HepG2 (cell line): ENCODE measurements at regions of chr12 and their contacts with region 1.

Region 1: GRCh38 chr12:65823513-65824375 is 539 bp upstream of the HMGA2 start:
- DNase-seq: peak; percentile 76
- ATAC-seq: peak; percentile 62
- H3K4me3 ChIP-seq: peak overlapping the region; percentile 76 to 98 (median 97)
- H3K27ac ChIP-seq: peak overlapping the region; percentile 84
- H3K4me1 ChIP-seq: peaks cover 22% of the 10 kb centered on the region
- H3K27me3 ChIP-seq: no peaks in the 10 kb centered on the region; a peak in 1 of 5 replicates
- CTCF ChIP-seq: no peak
- EP300 ChIP-seq: 0 out of 4 replicates have a peak, but pooled peaks of 1 of the 2 experiments have one; percentile 13
- POLR2A ChIP-seq: peak; percentile 58 to 71
- RAD21 ChIP-seq: peak; percentile 39; the same call in 1 of the 2 replicates

Region 2: GRCh38 chr12:65327207-65328076 is 496.3 kb before region 1 on chr12:
- CTCF ChIA-PET with region 1: no interaction called
- POLR2A ChIA-PET with region 1: no interaction called
- in situ Hi-C with region 1: no loop called
- intact Hi-C with region 1: loop called (anchors 5 kb)
- DNase-seq: peak; percentile 97
- ATAC-seq: peak; percentile 100
- H3K4me3 ChIP-seq: peak overlapping the region; percentile 29 to 54 (median 36); a peak in 5 of 6 replicates
- H3K27ac ChIP-seq: peak overlapping the region; percentile 87
- H3K4me1 ChIP-seq: peaks cover 40% of the 10 kb centered on the region
- H3K27me3 ChIP-seq: no peaks in the 10 kb centered on the region
- CTCF ChIP-seq: no peak
- EP300 ChIP-seq: peak; percentile 21 to 79; a peak in 3 of 4 replicates
- POLR2A ChIP-seq: 0 out of 4 replicates have a peak, but pooled peaks of 1 of the 2 experiments have one; percentile 40
- RAD21 ChIP-seq: no peak

Region 3: DNA sequence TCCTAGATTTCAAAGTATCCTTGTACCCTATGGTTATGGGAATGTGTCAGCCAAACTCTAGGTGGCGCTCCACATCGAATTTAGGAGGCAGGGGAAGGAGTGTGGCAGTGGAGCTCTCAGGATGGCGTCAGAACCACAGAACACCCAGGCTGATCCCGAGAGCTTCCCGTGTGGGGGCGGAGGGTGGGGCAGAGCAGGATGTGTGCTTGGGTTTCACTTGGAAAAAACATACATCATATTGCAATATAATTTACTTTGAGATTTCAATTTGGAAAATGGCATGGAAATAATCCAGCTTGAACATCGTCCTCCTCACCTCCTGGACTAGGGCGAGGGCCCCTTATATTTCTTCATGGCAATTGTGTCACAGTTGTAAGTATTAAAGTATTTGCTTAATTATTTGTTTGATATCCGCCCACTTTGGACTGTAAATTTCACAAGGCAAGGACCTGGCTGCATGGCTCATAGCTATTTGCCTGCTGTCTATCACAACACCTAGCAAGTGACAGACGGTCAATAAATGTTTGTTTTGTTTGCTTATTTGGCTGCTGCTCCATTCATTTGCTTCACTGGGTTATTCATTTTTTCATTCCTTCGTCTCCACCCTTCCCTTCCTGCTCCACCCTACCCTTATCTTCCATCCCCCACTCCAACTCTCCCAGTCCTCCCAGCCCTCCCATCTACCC is 221.0 kb before region 1 on chr12:
- CTCF ChIA-PET with region 1: no interaction called
- POLR2A ChIA-PET with region 1: no interaction called
- in situ Hi-C with region 1: no loop called
- intact Hi-C with region 1: loop called (anchors 2 kb)
- DNase-seq: peak; percentile 62
- ATAC-seq: peak; percentile 99
- H3K4me3 ChIP-seq: peak overlapping the region in 1 of 3 experiments; percentile 28; a peak in 1 of 6 replicates
- H3K27ac ChIP-seq: no peak overlapping the region
- H3K4me1 ChIP-seq: peaks cover 19% of the 10 kb centered on the region
- H3K27me3 ChIP-seq: no peaks in the 10 kb centered on the region
- CTCF ChIP-seq: peak; percentile 79
- EP300 ChIP-seq: no peak
- POLR2A ChIP-seq: no peak
- RAD21 ChIP-seq: no peak

Region 4: DNA sequence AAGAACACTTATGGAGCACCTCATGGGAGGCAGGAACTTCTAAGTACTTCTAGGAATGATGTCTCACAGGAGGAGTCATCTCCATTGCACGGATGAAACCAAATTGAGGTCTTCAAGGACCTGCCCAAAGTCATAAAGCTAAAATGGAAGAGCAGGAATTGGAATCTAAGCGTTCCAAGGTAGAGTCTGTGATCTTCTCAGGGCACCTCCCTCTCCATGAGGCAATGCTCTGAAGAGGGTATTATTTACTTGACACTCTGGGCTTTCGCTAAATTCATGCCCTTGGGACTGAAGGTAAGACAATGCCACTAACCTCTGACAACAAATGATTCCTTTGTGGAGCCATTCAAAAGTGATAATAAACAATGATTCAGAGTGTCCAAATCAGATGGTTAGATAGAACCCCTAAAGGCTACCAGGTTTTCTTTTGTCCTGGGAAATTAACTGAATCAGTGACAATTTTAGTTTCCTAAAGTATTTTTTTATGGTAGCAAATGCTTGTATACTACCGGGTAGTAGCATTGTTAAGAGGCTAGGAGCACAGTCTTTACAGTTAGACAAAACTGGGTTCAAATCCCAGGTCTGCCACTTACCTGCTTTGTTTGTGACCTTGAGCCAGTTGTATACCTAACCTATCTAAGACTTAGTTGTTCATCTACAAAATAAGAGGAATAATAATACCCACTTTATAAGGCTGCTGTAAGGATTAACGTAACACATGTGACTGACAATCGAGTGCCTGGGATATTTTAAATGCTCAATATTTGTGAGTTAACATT is 12.9 kb after region 1 on chr12:
- CTCF ChIA-PET with region 1: no interaction called
- POLR2A ChIA-PET with region 1: interaction called, 4 read pairs
- in situ Hi-C with region 1: no loop called
- intact Hi-C with region 1: loop called (anchors 2 kb)
- DNase-seq: peak; percentile 64
- ATAC-seq: peak; percentile 61
- H3K4me3 ChIP-seq: no peak overlapping the region
- H3K27ac ChIP-seq: peak overlapping the region; percentile 60
- H3K4me1 ChIP-seq: peaks cover 96% of the 10 kb centered on the region
- H3K27me3 ChIP-seq: no peaks in the 10 kb centered on the region
- CTCF ChIP-seq: no peak
- EP300 ChIP-seq: no peak
- POLR2A ChIP-seq: peak; percentile 12 to 25; a peak in 1 of 4 replicates
- RAD21 ChIP-seq: no peak

Region 5: GRCh38 chr12:65930114-65930828 is 106.5 kb after region 1 on chr12:
- CTCF ChIA-PET with region 1: no interaction called
- POLR2A ChIA-PET with region 1: interaction called, 12 read pairs
- in situ Hi-C with region 1: no loop called
- intact Hi-C with region 1: loop called (anchors 5 kb)
- DNase-seq: peak; percentile 96
- ATAC-seq: peak; percentile 88
- H3K4me3 ChIP-seq: peak overlapping the region in 1 of 3 experiments; percentile 25; a peak in 1 of 6 replicates
- H3K27ac ChIP-seq: peak overlapping the region; percentile 76
- H3K4me1 ChIP-seq: peaks cover 100% of the 10 kb centered on the region
- H3K27me3 ChIP-seq: no peaks in the 10 kb centered on the region
- CTCF ChIP-seq: 0 out of 2 replicates have a peak, but pooled peaks have one; percentile 12
- EP300 ChIP-seq: peak in 1 of 2 experiments; percentile 99; a peak in 2 of 4 replicates
- POLR2A ChIP-seq: no peak
- RAD21 ChIP-seq: no peak

Region 6: DNA sequence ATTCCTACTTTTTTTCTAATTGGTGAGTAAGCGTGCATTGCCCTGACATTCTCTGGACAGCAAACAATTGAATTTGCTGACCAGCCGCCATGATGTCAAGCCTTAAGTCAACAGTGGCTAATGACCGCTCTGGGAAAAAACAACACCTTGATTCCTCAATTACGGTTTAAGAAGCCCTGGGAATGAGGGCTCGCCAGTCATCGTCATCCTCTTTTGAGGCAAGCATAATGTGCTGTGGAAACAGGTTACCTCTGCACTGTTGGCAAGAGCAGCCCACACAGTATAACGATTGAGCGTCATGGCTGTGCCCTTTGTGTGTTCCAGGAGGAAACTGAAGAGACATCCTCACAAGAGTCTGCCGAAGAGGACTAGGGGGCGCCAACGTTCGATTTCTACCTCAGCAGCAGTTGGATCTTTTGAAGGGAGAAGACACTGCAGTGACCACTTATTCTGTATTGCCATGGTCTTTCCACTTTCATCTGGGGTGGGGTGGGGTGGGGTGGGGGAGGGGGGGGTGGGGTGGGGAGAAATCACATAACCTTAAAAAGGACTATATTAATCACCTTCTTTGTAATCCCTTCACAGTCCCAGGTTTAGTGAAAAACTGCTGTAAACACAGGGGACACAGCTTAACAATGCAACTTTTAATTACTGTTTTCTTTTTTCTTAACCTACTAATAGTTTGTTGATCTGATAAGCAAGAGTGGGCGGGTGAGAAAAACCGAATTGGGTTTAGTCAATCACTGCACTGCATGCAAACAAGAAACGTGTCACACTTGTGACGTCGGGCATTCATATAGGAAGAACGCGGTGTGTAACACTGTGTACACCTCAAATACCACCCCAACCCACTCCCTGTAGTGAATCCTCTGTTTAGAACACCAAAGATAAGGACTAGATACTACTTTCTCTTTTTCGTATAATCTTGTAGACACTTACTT is 139.4 kb after region 1 on chr12:
- CTCF ChIA-PET with region 1: no interaction called
- POLR2A ChIA-PET with region 1: interaction called, 5 read pairs
- in situ Hi-C with region 1: no loop called
- intact Hi-C with region 1: loop called (anchors 10 kb)
- DNase-seq: no peak
- ATAC-seq: no peak
- H3K4me3 ChIP-seq: no peak overlapping the region
- H3K27ac ChIP-seq: no peak overlapping the region
- H3K4me1 ChIP-seq: peaks cover 48% of the 10 kb centered on the region
- H3K27me3 ChIP-seq: no peaks in the 10 kb centered on the region
- CTCF ChIP-seq: peak; percentile 43
- EP300 ChIP-seq: no peak
- POLR2A ChIP-seq: no peak
- RAD21 ChIP-seq: no peak